H1 (cell line): ENCODE measurements at regions of chr10 and their contacts with region 1.

Region 1: GRCh38 chr10:101214446-101215396 is 14.5 kb downstream of the LBX1 start:
- DNase-seq: peak in 1 of 2 experiments; percentile 95
- H3K4me3 ChIP-seq: peak overlapping the region in 3 of 4 experiments; percentile 15 to 59 (median 20); a peak in 4 of 8 replicates
- H3K27ac ChIP-seq: no peak overlapping the region
- H3K4me1 ChIP-seq: peaks cover 0 to 17% (median 9%) of the 10 kb centered on the region in 4 experiments; a peak in 5 of 7 replicates
- H3K27me3 ChIP-seq: peaks cover 55 to 77% (median 68%) of the 10 kb centered on the region in 4 experiments
- CTCF ChIP-seq: peak in 2 of 3 experiments; percentile 88 to 96; a peak in 3 of 4 replicates
- EP300 ChIP-seq: no peak
- POLR2A ChIP-seq: no peak
- RAD21 ChIP-seq: peak; percentile 92 to 93

Region 2: DNA sequence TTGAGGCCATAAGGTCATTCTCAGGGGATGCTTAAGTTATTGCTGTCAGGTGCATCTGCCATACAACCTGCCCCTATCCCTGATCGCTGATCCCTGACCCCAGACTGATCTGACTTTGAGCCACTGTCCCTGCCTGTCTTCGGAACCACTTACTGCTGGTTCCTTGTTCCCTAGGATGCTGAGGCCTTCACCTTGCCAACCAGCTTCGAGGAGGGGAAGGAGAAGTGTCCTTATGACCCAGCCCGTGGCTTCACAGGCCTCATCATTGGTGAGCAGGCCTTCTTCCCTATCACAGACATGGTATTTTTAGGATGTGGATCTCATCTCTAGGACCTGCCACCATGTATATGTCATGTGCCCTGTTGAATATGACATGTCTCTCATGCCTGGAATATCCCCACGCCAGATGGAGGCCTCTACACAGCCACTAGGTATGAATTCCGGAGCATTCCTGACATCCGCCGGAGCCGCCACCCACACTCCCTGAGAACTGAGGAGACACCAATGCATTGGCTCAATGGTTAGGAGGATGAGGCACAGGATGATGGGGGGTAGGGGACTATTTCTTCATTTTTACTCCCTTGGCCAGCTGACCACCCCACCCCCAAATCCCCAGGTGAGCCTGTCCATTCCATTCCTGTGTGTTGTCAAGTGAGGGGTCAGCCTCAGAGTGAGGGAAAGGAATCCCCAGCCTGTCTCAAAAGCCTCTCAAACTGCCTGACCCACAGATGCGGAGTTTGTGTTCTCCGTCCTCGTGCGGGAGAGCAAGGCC is 236.4 kb before region 1 on chr10:
- CTCF ChIA-PET with region 1: no interaction called
- POLR2A ChIA-PET with region 1: no interaction called
- DNase-seq: no peak
- H3K4me3 ChIP-seq: no peak overlapping the region
- H3K27ac ChIP-seq: no peak overlapping the region; the same call in 1 of the 2 replicates
- H3K4me1 ChIP-seq: no peaks in the 10 kb centered on the region
- H3K27me3 ChIP-seq: no peaks in the 10 kb centered on the region
- CTCF ChIP-seq: no peak
- EP300 ChIP-seq: no peak
- POLR2A ChIP-seq: no peak
- RAD21 ChIP-seq: no peak

Region 3: DNA sequence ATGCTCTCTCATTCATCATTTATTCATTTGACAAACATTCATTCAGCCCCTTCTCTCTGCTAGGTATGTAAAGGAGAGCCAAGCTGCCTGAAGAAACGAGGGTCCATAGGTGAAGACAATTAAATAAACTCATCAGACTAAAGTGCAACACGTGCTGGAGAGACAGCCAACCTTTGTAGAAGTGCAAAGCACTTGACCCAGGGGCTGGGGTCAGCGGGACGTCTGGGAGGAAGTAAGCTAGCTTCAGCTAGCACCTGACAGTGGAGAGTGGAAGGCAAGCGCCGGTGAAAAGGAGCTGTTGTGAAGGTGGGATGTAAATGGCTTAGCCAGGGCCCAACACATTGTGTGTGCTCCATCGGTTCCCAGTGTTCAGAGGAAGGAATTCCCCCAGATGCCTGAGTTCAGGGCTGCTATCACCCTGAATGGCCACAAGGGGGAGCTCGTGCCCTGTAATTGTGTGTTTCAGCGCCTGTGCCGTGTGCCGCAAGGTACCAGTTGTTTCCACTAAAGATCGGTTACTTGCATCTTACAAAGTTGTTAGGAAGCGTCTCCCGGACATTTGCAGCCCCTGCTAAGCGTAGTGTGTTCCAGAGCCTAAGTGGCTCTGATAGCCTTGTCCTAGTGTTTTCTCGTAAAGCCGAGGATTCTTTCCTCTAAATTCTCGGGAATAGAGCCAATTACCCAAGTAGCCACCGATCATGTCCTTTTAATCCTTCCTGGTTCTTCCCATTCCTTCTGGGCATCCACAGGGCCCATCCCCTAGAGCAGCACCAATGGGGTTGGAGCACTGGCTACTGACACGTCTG is 53.0 kb before region 1 on chr10:
- CTCF ChIA-PET with region 1: interaction called, 44 read pairs
- POLR2A ChIA-PET with region 1: no interaction called
- DNase-seq: peak; percentile 77 to 88
- H3K4me3 ChIP-seq: peak overlapping the region in 1 of 4 experiments; percentile 48; a peak in 4 of 8 replicates
- H3K27ac ChIP-seq: no peak overlapping the region
- H3K4me1 ChIP-seq: peaks cover 0 to 7% (median 1%) of the 10 kb centered on the region in 4 experiments; a peak in 1 of 7 replicates
- H3K27me3 ChIP-seq: peaks cover 0 to 13% (median 10%) of the 10 kb centered on the region in 4 experiments; a peak in 5 of 7 replicates
- CTCF ChIP-seq: peak; percentile 96 to 100 (median 97)
- EP300 ChIP-seq: 0 out of 3 replicates have a peak, but pooled peaks of 1 of the 2 experiments have one; percentile 17
- POLR2A ChIP-seq: no peak
- RAD21 ChIP-seq: peak; percentile 94 to 97

Region 4: DNA sequence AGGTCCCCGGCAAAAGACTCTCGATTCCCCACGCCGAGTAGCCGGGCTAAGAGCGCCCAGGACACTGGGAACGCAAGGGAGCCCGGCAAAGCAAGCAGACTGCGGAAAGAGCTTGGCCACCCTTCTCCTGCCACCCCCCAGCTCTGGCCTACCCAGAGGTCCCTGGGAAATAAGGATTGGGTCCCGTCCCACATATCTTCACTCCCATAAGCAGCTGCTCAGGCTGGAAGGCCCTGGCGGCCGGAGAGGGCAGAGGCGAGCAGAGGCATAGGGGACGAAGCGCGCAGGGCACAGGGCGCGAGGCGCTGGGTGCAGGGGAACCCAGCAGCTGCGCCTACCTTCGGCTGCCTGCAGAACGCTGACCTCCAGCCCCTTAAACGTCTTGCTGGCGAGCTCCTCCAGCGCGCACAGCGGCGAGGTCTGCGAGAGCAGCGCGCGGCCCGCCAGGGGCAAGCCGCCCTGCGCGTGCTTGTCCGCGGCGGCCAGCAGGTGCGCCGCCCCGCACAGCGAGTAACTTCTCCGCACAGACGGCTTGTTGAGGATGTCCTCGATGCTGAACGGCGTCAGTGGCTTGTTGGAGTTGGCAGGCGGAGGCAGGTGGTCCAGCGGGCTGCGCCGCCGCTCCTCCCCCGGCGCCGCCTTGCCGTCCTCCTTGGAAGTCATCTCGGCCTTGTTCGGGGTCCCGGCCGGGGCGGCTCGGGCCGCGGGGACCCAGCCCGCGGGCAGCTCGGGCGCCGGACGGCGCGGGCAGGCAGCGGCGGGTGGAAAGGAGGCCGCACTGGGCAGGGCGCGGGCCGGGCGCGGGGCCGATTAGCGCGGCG is 13.6 kb after region 1 on chr10:
- CTCF ChIA-PET with region 1: interaction called, 113 read pairs
- POLR2A ChIA-PET with region 1: interaction called, 3 read pairs
- DNase-seq: no peak
- H3K4me3 ChIP-seq: no peak overlapping the region
- H3K27ac ChIP-seq: no peak overlapping the region
- H3K4me1 ChIP-seq: peaks cover 6 to 29% (median 10%) of the 10 kb centered on the region in 4 experiments; a peak in 6 of 7 replicates
- H3K27me3 ChIP-seq: peaks cover 97 to 100% (median 100%) of the 10 kb centered on the region in 4 experiments
- CTCF ChIP-seq: peak in 1 of 3 experiments; percentile 18; a peak in 1 of 4 replicates
- EP300 ChIP-seq: no peak
- POLR2A ChIP-seq: no peak
- RAD21 ChIP-seq: no peak

Region 5: DNA sequence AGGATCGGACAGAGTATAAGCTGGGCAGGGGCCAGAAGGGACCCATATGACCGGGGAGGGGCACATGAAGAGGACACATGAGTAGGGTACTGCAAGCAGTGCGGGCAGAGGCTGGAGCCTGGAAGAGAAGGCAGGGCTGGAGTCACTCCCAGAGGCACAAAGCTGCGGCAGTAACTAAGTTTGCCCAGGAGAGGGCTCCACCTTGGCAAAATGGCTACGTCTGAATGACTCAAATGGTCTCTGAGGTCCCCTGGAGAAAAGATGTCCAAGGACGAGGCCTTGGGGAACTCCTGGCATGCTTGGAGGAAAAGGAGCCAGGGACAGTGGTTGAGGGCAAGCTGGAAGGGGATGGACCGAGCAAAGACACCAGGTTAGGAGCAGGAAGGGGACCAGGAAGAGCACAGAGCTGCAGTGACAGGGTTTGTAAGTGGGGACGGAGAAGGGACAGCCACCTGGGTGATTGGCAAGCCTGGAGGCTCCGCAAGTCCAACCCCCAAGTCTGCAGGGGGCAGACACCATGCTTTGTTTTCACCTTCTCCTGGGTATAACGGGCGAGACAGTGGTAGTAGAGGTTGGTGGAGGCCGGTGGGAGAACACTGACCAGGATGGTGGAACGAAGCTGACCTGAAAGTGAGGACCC is 57.6 kb after region 1 on chr10:
- CTCF ChIA-PET with region 1: interaction called, 32 read pairs
- POLR2A ChIA-PET with region 1: no interaction called
- DNase-seq: peak; percentile 65 to 90
- H3K4me3 ChIP-seq: peak overlapping the region in 1 of 4 experiments; percentile 14; a peak in 1 of 8 replicates
- H3K27ac ChIP-seq: no peak overlapping the region
- H3K4me1 ChIP-seq: peaks cover 4 to 8% (median 6%) of the 10 kb centered on the region in 4 experiments; a peak in 5 of 7 replicates
- H3K27me3 ChIP-seq: no peaks in the 10 kb centered on the region; a peak in 3 of 7 replicates
- CTCF ChIP-seq: peak; percentile 80 to 93 (median 82)
- EP300 ChIP-seq: no peak
- POLR2A ChIP-seq: no peak
- RAD21 ChIP-seq: peak; percentile 57 to 65

Region 6: GRCh38 chr10:101311185-101312066 is 96.7 kb after region 1 on chr10:
- CTCF ChIA-PET with region 1: interaction called, 51 read pairs
- POLR2A ChIA-PET with region 1: no interaction called
- DNase-seq: peak in 1 of 2 experiments; percentile 74
- H3K4me3 ChIP-seq: peak overlapping the region in 2 of 4 experiments; percentile 23 to 49; a peak in 5 of 8 replicates
- H3K27ac ChIP-seq: no peak overlapping the region
- H3K4me1 ChIP-seq: peaks cover 0 to 13% (median 3%) of the 10 kb centered on the region in 4 experiments; a peak in 5 of 7 replicates
- H3K27me3 ChIP-seq: no peaks in the 10 kb centered on the region; a peak in 1 of 7 replicates
- CTCF ChIP-seq: no peak
- EP300 ChIP-seq: 0 out of 3 replicates have a peak, but pooled peaks of 1 of the 2 experiments have one; percentile 40
- POLR2A ChIP-seq: no peak; a peak in 1 of 3 replicates
- RAD21 ChIP-seq: no peak; a peak in 1 of 4 replicates

Region 7: DNA sequence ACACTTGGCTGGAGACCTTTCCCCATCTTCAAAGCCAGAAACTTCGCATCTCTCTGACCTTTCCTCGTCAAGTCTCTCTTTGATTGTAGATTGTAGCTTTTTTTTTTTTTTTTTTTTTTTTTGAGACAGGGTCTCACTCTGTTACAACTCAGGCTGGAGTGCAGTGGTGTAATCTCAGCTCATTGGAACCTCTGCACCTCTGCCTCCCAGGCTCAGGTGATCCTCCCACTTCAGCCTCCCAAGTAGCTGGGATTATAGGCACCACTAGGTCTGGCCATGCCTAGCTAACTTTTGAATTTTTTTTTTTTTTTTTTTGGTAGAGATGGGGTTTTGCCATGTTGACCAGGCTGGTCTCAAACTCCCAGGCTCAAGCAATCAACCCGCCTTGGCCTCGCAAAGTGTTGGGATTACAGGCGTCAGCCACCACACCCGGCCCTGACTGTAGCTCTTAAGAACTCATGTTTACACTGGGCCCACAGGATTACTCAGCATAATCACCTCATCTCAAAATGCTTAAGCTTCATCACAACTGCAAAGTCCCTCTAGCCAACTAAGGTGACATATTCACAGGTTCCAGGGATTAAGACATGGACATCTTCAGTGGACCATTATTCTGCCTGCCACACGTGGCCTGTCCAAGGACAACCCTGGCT is 361.6 kb after region 1 on chr10:
- CTCF ChIA-PET with region 1: interaction called, 49 read pairs
- POLR2A ChIA-PET with region 1: interaction called, 12 read pairs
- DNase-seq: no peak
- H3K4me3 ChIP-seq: no peak overlapping the region
- H3K27ac ChIP-seq: no peak overlapping the region
- H3K4me1 ChIP-seq: peaks cover 3 to 9% (median 8%) of the 10 kb centered on the region in 4 experiments
- H3K27me3 ChIP-seq: peaks cover 2 to 21% (median 14%) of the 10 kb centered on the region in 4 experiments; a peak in 6 of 7 replicates
- CTCF ChIP-seq: no peak
- EP300 ChIP-seq: no peak
- POLR2A ChIP-seq: no peak
- RAD21 ChIP-seq: no peak